Common myeloid progenitor, CD34-positive (primary cell): ENCODE measurements at regions of chr7 and their contacts with region 1.

Region 1: DNA sequence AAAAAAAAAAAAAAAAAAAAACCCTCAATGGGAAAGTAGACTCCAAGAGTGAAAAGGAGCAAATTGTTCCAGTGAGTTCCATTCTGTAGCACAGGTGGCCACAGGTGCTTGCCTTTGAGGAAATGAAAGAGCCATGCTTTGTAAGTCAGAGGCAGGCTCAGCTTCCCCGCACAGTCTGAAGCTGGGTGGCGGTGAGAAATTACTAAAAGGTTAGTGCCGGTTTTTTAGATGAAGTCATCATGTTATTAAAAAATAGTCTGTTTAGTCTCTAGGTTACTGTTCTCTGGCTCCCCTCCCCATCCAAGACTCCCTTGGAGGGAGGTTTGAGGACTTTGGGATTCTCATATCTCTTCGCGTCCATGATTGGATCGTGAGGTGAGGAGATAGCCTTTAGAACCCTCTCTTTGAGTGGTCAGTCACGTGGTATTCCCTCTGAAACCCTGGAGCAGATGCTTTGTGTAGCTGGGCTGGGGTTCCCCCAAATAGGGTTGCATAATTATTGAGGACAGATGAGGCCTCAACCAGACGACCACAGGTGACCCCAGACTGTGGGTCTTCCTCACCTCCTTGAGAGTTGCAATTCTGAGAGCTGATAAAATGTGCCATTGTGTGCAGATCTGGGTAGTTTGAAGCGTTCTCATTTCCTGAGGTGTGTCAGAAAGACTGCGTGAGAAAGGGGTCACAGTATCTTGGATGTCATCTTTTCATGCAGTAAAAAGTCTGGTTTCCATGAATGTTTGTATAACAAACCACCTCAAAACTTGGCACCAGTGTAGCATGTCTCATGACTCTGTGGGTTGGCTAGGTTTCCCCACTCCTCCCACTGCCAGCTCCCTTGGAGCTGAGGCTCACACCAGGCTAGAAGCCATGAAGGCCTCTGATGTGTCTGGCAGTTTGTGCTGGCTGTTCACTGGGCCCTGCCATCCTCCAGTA is 27.1 kb downstream of the OGDH start:
- DNase-seq: peak; percentile 69 to 85 (median 82)
- H3K4me3 ChIP-seq: peak overlapping the region in 2 of 7 experiments; percentile 20 to 26
- H3K27ac ChIP-seq: peak overlapping the region; percentile 62 to 87
- H3K4me1 ChIP-seq: peaks cover 29 to 86% (median 73%) of the 10 kb centered on the region in 4 experiments
- H3K27me3 ChIP-seq: no peaks in the 10 kb centered on the region

Region 2: GRCh38 chr7:44606450-44607254 is 26.9 kb before region 1 on chr7 and contains the start of gene OGDH:
- CTCF ChIA-PET with region 1: interaction called, 10 read pairs
- POLR2A ChIA-PET with region 1: interaction called, 3 read pairs
- DNase-seq: peak; percentile 98 to 99 (median 99)
- H3K4me3 ChIP-seq: peak within 1 kb of the TSS; percentile 74 to 98 (median 93)
- H3K27ac ChIP-seq: peak within 1 kb of the TSS; percentile 77 to 91
- H3K4me1 ChIP-seq: peaks cover 8 to 38% (median 21%) of the 10 kb centered on the region in 4 experiments
- H3K27me3 ChIP-seq: peaks cover 0 to 2% (median 0%) of the 10 kb centered on the region in 5 experiments

Region 3: DNA sequence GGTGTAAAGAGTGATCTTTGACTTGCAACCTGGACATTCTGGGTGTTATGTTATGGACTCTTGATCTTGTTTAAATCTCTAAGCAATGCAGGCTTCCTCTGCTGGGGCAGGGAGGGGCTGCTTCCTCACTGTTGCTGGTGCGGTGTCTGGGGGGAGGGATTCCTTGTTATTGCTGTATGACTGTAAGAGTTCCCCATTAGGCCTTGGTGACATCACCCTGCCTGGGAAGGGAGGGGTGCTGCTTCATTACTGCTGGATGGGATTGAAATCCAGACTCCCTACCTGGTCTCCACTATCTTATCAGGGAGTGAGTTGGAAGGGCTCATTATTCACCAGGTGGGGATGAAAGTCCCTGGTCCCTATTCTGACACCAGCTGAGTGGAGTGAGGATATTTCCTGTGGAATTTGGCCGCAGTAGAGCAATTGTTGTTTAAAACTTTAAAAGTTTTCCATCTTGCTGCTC is 18.3 kb before region 1 on chr7:
- CTCF ChIA-PET with region 1: interaction called, 10 read pairs
- POLR2A ChIA-PET with region 1: no interaction called
- DNase-seq: peak; percentile 49 to 88 (median 85)
- H3K4me3 ChIP-seq: no peak overlapping the region
- H3K27ac ChIP-seq: peak overlapping the region in 1 of 2 experiments; percentile 43
- H3K4me1 ChIP-seq: peaks cover 7 to 13% (median 10%) of the 10 kb centered on the region in 4 experiments
- H3K27me3 ChIP-seq: no peaks in the 10 kb centered on the region